ENCODE measurements at regions of chr2 and their contacts with region 1.

Region 1: DNA sequence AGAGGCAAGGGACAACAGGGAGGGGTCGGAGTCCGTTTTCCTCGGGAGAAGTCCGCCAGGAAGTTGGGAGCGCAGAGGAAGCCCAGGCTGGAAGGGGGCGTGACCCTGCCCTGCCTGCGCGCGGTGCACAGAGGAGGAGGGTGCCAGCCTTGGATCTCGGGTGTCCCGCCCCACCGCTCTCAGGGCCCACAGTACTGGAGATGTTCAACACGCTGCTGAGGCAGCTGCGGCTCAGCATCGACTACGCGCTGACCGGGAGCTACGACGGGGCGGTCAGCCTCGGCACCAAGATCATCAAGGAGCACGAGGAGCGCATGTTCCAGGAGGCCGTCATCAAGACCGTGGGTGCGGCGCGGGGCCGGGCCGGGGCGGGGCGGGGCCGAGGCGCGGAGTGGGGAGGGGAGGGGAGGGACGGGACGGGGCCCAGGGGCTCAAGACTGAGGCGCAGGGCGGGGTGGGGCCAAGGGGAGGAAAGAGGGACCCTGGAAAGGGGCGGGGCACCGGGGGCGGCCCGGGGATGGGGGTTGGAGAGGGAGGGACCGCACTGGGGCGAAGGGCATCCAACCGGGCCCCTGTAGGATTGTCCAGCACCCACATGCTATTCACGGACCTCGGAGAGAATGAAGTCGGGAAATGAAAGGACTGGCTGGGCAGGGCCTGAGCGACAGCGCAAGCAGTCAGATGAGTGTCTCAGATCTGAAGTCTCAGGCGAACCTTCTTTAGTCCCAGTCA is 36.6 kb downstream of the POMC start:
- DNase-seq: peak in 1 of 2 experiments; percentile 67
- H3K4me3 ChIP-seq: peak overlapping the region; percentile 39 to 56 (median 49); a peak in 7 of 8 replicates
- H3K27ac ChIP-seq: no peak overlapping the region
- H3K4me1 ChIP-seq: peaks cover 0 to 12% (median 7%) of the 10 kb centered on the region in 4 experiments; a peak in 6 of 7 replicates
- H3K27me3 ChIP-seq: peaks cover 2 to 32% (median 21%) of the 10 kb centered on the region in 4 experiments
- CTCF ChIP-seq: no peak
- EP300 ChIP-seq: no peak
- POLR2A ChIP-seq: no peak
- RAD21 ChIP-seq: no peak

Region 2: DNA sequence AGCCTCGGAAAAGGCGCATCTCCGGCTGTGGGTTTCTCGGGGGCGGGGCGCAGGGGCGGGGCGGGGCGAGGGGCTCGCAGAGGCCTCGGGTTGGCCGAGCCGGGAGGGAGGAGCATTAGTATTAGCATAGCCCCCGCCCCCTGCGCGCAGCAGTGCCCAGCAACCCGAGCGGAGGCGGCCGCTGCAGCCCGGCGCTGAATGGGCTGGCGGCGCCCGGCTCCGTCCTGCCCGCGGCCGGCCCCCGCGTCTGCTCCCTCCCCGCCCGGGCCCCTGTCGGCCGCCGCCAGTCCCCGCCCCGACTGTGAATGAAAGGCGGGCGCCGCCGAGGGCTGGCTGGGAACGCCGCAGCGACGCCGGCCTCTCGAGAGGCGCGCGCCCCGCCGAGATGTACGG is 89.8 kb before region 1 on chr2 and contains the start of gene EFR3B:
- CTCF ChIA-PET with region 1: interaction called, 21 read pairs
- POLR2A ChIA-PET with region 1: interaction called, 3 read pairs
- DNase-seq: peak; percentile 53 to 82
- H3K4me3 ChIP-seq: peak within 1 kb of the TSS; percentile 66 to 98 (median 77)
- H3K27ac ChIP-seq: no peak within 1 kb of the TSS
- H3K4me1 ChIP-seq: peaks cover 0 to 10% (median 5%) of the 10 kb centered on the region in 4 experiments; a peak in 5 of 7 replicates
- H3K27me3 ChIP-seq: peaks cover 0 to 16% (median 12%) of the 10 kb centered on the region in 4 experiments; a peak in 6 of 7 replicates
- CTCF ChIP-seq: no peak
- EP300 ChIP-seq: no peak
- POLR2A ChIP-seq: no peak; a peak in 1 of 3 replicates
- RAD21 ChIP-seq: no peak
- total RNA-seq, gene EFR3B: 8.8 and 9.6 TPM in 2 replicates

Region 3: GRCh38 chr2:25115902-25116301 is 15.8 kb before region 1 on chr2:
- CTCF ChIA-PET with region 1: interaction called, 21 read pairs
- POLR2A ChIA-PET with region 1: no interaction called
- DNase-seq: no peak
- H3K4me3 ChIP-seq: no peak overlapping the region
- H3K27ac ChIP-seq: no peak overlapping the region
- H3K4me1 ChIP-seq: no peaks in the 10 kb centered on the region; a peak in 2 of 7 replicates
- H3K27me3 ChIP-seq: no peaks in the 10 kb centered on the region
- CTCF ChIP-seq: no peak
- EP300 ChIP-seq: no peak
- POLR2A ChIP-seq: no peak
- RAD21 ChIP-seq: no peak

Measured in H1 (cell line).